Mammary epithelial cell (primary cell): ENCODE measurements at regions of chr18 and their contacts with region 1.

Region 1: GRCh38 chr18:60534538-60534937 is 162.0 kb upstream of the MC4R start:
- DNase-seq: peak; percentile 8
- H3K4me3 ChIP-seq: no peak overlapping the region
- H3K27ac ChIP-seq: no peak overlapping the region
- H3K4me1 ChIP-seq: peaks cover 5% of the 10 kb centered on the region
- H3K27me3 ChIP-seq: peaks cover 3% of the 10 kb centered on the region
- CTCF ChIP-seq: no peak

Region 2: DNA sequence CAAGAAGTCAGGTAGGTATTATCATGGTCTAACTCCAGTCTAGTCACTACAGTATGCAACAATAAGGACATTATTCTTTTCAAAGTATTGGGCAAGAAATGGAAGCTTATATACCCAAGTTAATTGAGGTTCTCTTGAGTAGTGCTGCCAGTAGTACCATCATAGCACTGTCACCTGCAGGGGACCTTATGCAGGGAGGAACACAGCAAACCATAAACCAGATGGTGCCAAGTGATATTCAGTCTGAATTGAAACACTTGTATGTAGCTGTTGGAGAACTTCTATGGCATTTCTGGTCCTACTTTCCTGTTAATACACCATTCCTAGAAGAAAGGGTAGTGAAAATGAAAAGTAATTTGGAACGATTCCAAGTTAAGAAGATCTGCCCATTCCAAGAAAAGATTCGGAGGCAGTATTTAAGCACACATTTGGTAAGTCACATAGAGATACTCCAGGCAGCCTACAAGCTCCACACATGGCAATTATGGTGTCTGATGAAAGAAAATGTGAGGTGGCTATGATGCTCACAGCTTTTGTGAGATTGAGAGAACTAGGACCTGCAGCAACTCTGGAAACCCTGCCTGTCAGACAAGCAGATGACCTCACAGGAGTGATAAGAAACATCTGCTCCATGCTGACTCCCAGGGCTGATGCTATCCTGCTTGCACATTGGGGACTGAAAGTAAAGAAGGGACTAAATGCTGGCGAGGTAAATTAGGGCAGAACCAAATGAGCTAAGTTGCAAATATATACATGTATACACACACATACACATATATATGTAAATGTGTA is 336.7 kb before region 1 on chr18:
- CTCF ChIA-PET with region 1: no interaction called
- dilution Hi-C with region 1: no loop called
- in situ Hi-C with region 1: no loop called
- intact Hi-C with region 1: no loop called
- DNase-seq: no peak
- H3K4me3 ChIP-seq: no peak overlapping the region
- H3K27ac ChIP-seq: no peak overlapping the region
- H3K4me1 ChIP-seq: no peaks in the 10 kb centered on the region
- H3K27me3 ChIP-seq: peaks cover 3% of the 10 kb centered on the region
- CTCF ChIP-seq: no peak

Region 3: DNA sequence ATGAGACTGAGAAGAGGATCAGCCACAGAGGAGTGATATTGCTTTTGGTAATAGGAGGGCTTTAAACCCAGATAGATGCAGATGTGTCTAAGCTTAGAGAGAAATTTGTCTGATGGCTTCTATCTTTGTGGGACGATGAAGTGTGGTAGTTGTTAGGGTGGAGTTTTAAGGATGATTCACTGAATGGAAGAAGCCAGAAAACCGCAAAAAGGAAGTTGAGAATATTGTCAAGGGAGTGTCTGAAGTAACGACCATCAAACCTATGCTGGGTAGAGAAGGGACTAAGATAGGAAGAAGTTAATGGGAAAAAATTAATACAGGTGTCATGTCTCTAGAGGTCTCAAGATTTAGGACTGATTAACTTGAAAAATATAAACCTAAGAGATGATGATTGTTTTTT is 33.7 kb after region 1 on chr18:
- CTCF ChIA-PET with region 1: no interaction called
- dilution Hi-C with region 1: loop called (anchors 5 kb)
- in situ Hi-C with region 1: no loop called
- intact Hi-C with region 1: no loop called
- DNase-seq: no peak
- H3K4me3 ChIP-seq: no peak overlapping the region
- H3K27ac ChIP-seq: no peak overlapping the region
- H3K4me1 ChIP-seq: no peaks in the 10 kb centered on the region
- H3K27me3 ChIP-seq: no peaks in the 10 kb centered on the region
- CTCF ChIP-seq: no peak